SK-MEL-5 (cell line): ENCODE measurements at regions of chr1 and their contacts with region 1.

Region 1: DNA sequence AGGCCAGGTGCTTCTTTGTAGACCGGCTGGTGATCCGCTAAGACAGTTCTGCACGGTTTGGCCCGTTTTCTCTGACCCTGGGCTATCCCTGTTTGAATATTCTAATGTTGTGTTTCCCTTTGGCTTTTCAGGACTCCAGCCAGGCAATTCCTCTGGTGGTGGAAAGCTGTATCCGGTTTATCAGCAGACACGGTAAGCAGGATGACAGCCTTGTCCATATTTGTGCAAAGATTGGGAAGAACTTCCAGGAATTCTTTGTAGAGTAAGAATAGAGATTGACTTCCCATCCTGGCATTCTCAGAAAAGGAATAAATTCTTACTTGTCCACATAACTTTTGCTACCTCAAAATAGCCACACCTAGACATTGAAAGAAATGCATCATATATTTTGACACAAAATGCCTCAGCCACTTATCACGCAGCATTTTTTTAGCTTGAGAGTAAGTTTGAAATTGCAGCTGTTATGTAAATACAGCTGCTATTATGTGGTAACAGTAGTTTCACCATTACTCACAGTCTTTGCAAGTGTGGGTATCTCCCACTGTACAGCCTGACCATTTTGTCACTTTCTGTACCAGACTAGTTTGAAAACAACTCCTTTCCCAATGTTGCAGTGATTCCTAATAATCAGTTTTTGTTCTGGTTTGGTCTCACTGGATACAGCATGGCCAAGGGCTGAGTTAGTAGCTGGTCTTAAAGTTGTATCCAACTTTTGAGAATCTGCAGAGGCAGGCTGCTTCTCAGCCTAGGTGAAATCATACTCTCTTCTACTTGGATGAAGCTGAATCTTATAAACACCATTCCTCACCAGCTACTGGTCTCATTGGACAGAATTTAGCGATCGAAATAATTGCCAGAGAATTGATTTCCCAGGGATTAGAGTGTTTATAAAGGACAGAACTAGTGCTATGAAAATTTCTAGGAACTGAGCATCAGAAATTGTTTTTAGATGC is 40.0 kb upstream of the IKBKE start:
- DNase-seq: no peak

Region 2: GRCh38 chr1:206128196-206128595 is 302.1 kb before region 1 on chr1:
- in situ Hi-C with region 1: loop called (anchors 25 kb)
- DNase-seq: peak; percentile 7